H1 (cell line): ENCODE measurements at regions of chrX and their contacts with region 1.

Region 1: GRCh38 chrX:103376118-103376978 is at the start of gene BEX3:
- DNase-seq: peak; percentile 56 to 70
- H3K4me3 ChIP-seq: peak within 1 kb of the TSS; percentile 65 to 86 (median 69)
- H3K27ac ChIP-seq: peak within 1 kb of the TSS; percentile 92
- H3K4me1 ChIP-seq: peaks cover 0 to 2% (median under 1%) of the 10 kb centered on the region in 4 experiments; a peak in 4 of 7 replicates
- H3K27me3 ChIP-seq: no peaks in the 10 kb centered on the region
- CTCF ChIP-seq: no peak
- EP300 ChIP-seq: no peak
- POLR2A ChIP-seq: peak; percentile 85 to 98
- RAD21 ChIP-seq: peak; percentile 7 to 14; a peak in 2 of 4 replicates
- total RNA-seq, gene BEX3: 310 and 330 TPM in 2 replicates

Region 2: DNA sequence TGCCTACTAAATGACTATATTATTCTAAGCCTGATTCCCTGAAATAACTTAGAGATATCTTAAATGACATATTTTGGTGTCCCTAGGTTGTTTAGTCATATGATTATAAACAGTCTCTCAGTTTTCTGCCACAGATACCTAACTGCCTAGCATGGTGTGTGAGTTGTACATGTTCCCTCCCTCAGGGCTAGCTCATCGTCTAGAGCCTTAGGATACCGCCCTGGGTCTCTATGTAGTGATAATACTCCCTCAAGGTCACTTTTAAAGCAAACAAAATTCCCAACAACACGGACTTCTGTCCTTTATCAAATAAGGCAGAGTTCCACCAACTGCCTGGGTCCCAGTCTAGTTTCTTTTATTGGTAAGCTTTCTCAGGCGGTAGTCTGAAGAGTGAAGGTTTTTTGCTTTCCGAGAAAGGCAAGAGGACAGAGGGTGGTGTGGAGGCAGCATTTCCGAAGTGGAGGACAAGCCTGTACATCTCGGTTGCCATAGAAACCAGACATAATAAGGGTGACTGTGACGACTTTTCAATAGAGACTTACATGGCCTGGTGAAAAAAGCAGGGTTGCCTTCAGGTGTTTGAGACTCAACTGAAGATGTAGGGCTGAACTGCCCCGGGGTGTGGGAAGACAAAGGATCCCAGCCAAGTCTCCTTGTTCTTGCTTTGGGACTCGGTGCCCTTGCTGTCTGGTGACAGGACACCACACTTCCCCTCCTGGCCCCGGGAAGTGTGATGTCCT is 493.0 kb before region 1 on chrX:
- CTCF ChIA-PET with region 1: no interaction called
- POLR2A ChIA-PET with region 1: no interaction called
- DNase-seq: no peak
- H3K4me3 ChIP-seq: no peak overlapping the region
- H3K27ac ChIP-seq: no peak overlapping the region
- H3K4me1 ChIP-seq: no peaks in the 10 kb centered on the region
- H3K27me3 ChIP-seq: no peaks in the 10 kb centered on the region
- CTCF ChIP-seq: no peak
- EP300 ChIP-seq: no peak
- POLR2A ChIP-seq: no peak
- RAD21 ChIP-seq: no peak

Region 3: GRCh38 chrX:103398421-103398864 is 22.1 kb after region 1 on chrX:
- CTCF ChIA-PET with region 1: interaction called, 4 read pairs
- POLR2A ChIA-PET with region 1: interaction called, 11 read pairs
- DNase-seq: no peak
- H3K4me3 ChIP-seq: no peak overlapping the region
- H3K27ac ChIP-seq: no peak overlapping the region
- H3K4me1 ChIP-seq: no peaks in the 10 kb centered on the region
- H3K27me3 ChIP-seq: peaks cover 0 to 15% (median 3%) of the 10 kb centered on the region in 4 experiments; a peak in 3 of 7 replicates
- CTCF ChIP-seq: no peak
- EP300 ChIP-seq: no peak
- POLR2A ChIP-seq: no peak
- RAD21 ChIP-seq: no peak